Endothelial cell of umbilical vein (primary cell): ENCODE measurements at regions of chr13 and their contacts with region 1.

Region 1: DNA sequence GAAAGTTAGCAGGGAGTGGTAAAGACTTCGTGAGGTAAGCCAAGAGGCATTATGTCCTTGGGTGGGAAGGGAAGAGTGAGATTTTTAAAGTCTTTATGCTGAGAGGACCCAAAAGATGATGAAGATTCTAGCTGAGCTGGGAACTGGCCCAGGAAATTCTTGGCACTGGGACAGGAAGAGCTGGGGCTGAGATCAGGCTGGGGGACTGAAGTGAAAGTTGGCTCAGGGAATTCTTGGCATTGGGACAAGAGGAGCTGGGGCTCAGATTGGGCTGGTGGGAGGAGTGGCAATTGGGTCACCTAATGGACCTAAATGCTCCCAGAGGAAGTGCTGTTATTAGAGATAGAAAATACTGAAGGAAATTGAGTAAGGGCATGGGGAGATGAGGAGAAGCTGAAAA is 8.8 kb downstream of the SCEL start:
- DNase-seq: peak; percentile 71
- H3K4me3 ChIP-seq: no peak overlapping the region
- H3K27ac ChIP-seq: no peak overlapping the region
- H3K4me1 ChIP-seq: peaks cover 8% of the 10 kb centered on the region
- H3K27me3 ChIP-seq: peaks cover 0 to 2% of the 10 kb centered on the region in 2 experiments
- CTCF ChIP-seq: no peak
- POLR2A ChIP-seq: no peak

Region 2: GRCh38 chr13:77398825-77399620 is 145.3 kb before region 1 on chr13:
- CTCF ChIA-PET with region 1: no interaction called
- POLR2A ChIA-PET with region 1: no interaction called
- dilution Hi-C with region 1: no loop called
- intact Hi-C with region 1: no loop called
- DNase-seq: no peak
- H3K4me3 ChIP-seq: no peak overlapping the region
- H3K27ac ChIP-seq: no peak overlapping the region
- H3K4me1 ChIP-seq: no peaks in the 10 kb centered on the region
- H3K27me3 ChIP-seq: peaks cover 3 to 4% of the 10 kb centered on the region in 2 experiments
- CTCF ChIP-seq: no peak
- POLR2A ChIP-seq: no peak

Region 3: GRCh38 chr13:77521595-77522367 is 22.6 kb before region 1 on chr13:
- CTCF ChIA-PET with region 1: interaction called, 6 read pairs
- POLR2A ChIA-PET with region 1: no interaction called
- dilution Hi-C with region 1: no loop called
- intact Hi-C with region 1: loop called (anchors 2 kb)
- DNase-seq: peak; percentile 58
- H3K4me3 ChIP-seq: no peak overlapping the region
- H3K27ac ChIP-seq: peak overlapping the region; percentile 59
- H3K4me1 ChIP-seq: peaks cover 39% of the 10 kb centered on the region
- H3K27me3 ChIP-seq: no peaks in the 10 kb centered on the region
- CTCF ChIP-seq: no peak
- POLR2A ChIP-seq: no peak

Region 4: GRCh38 chr13:77565635-77566034 is 21.3 kb after region 1 on chr13:
- CTCF ChIA-PET with region 1: interaction called, 3 read pairs
- POLR2A ChIA-PET with region 1: no interaction called
- dilution Hi-C with region 1: no loop called
- intact Hi-C with region 1: loop called (anchors 1 kb)
- DNase-seq: peak; percentile 71
- H3K4me3 ChIP-seq: no peak overlapping the region
- H3K27ac ChIP-seq: no peak overlapping the region
- H3K4me1 ChIP-seq: no peaks in the 10 kb centered on the region
- H3K27me3 ChIP-seq: peaks cover 5 to 8% of the 10 kb centered on the region in 2 experiments
- CTCF ChIP-seq: peak; percentile 28 to 33
- POLR2A ChIP-seq: no peak